ENCODE measurements at regions of chr19 and their contacts with region 1.

Region 1: DNA sequence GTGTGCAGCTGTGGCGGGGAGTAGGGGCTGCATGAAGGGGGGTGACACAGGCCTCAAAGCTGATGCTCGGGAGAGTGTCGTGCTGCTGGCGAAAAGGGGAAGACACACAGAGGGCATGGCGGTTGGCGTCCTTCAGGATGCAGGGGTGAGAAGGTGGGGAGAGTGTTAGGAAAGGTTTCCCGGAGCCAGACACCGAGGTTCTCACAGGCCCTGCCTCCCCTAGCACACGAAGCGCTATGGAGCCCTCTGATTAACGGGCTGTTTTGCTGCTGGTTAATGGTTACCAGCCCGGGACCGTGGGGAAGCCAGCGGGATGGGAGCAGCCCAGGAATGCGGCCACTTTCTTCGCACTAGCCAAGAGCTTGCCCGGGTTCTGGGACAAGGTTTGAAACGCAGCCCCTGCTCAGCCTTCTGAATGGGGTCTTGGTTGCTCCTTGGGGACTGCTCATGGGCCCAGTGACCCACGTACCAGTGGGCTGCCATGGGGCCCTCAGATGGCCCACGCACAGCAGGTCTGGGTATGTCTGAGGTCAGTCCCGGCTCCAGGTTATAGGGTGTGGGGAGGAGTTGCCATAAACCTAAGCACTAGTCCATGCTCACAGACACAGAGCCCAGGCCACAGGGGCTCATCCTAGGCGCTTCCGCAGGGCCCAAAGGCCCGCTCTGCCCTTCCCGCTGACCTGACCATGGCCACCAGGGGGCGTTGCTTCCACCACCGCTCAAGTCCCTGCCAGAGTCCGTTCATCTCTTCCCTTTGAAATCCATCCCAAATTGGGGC is 31.3 kb upstream of the ISYNA1 start:
- DNase-seq: peak; percentile 87
- ATAC-seq: peak; percentile 74
- H3K4me3 Mint-ChIP-seq: no peak overlapping the region
- H3K27ac Mint-ChIP-seq: no peak overlapping the region
- H3K4me1 Mint-ChIP-seq: peaks cover 9% of the 10 kb centered on the region
- H3K27me3 Mint-ChIP-seq: no peaks in the 10 kb centered on the region
- CTCF ChIP-seq: peak; percentile 88

Region 2: DNA sequence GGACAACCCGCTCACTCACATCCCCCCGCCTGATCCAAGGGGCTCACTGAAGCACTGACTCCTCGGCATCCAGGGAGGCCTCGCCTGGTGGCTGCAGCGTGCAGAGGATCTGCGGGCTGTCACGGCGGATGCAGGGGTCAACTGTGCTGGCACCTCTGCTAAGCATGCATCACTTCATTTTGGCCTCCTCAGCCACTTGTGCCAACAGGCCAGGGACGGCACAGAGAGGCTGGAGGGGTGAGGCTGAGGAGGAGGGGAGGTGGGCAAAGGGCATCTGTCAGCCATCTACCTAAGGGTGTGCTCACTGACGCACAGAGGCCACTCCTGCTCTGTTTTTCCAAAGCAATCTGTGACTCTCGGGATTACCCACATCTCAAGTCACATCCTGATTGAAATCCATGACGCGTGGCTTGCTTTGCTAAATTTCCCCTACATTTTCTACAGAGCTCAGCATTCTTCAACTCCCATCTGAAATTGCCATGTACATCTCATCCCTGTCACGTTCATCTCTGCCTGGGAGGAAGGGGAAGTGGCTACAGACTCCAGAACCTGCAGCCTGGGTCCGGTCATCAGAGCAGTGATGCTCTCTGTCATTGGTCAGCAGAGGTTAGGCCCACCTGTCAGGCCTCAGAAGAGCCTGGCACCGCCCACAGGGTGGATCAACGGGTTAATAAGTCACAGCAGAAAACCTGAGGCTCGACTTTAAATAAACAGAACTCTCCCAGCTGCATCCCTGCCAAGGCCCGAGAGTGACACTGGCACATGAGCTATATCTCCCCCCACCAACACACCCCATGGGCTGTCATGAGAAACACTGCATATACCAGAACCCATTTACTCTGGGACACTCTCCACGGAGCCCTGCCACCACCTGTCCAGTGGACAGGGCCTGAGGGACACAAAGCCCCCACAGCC is 35.0 kb after region 1 on chr19:
- CTCF ChIA-PET with region 1: interaction called, 16 read pairs
- POLR2A ChIA-PET with region 1: no interaction called
- DNase-seq: no peak
- ATAC-seq: peak; percentile 68
- H3K4me3 Mint-ChIP-seq: no peak overlapping the region
- H3K27ac Mint-ChIP-seq: peak overlapping the region; percentile 73; the same call in 1 of the 2 replicates
- H3K4me1 Mint-ChIP-seq: peaks cover 13% of the 10 kb centered on the region
- H3K27me3 Mint-ChIP-seq: no peaks in the 10 kb centered on the region
- CTCF ChIP-seq: no peak

Region 3: DNA sequence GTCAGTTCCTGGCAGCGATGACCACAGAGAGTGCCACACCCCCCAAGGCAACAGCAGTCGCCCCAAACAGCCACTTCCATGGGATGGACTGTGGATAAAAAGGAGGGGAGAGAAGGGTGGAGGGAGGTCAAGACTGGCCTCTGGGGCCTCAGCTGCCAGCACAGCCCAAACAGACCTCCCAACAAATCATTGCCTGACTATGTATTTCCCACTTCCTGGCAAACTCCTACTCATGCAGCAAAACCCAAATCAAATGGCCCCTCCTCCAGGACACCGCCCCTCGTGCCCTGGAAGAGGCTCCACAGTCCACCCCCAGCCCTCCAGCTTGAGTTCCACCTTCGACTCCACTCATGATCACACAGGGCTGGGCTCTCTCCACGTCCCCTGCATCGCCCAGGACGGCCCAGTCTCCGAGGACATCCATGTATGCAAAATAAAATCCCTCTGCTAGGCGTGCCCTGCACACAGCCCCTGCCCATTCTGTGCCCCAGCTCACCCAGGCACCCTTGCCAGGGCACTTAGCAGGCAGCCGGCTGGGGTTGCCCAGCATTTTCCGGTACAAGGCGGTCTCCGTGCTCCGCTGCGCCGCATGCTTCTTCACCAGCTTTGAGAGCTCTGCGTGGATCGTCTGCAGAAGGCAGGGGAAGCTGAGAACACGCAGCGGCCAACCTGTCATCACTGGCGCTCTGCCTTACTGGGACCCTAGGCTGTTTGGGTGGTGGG is 63.1 kb after region 1 on chr19:
- CTCF ChIA-PET with region 1: interaction called, 11 read pairs
- POLR2A ChIA-PET with region 1: no interaction called
- DNase-seq: no peak
- ATAC-seq: no peak
- H3K4me3 Mint-ChIP-seq: no peak overlapping the region
- H3K27ac Mint-ChIP-seq: no peak overlapping the region
- H3K4me1 Mint-ChIP-seq: no peaks in the 10 kb centered on the region
- H3K27me3 Mint-ChIP-seq: no peaks in the 10 kb centered on the region
- CTCF ChIP-seq: no peak

Region 4: GRCh38 chr19:18588611-18589379 is 119.5 kb after region 1 on chr19 and contains the start of gene REX1BD:
- CTCF ChIA-PET with region 1: interaction called, 39 read pairs
- POLR2A ChIA-PET with region 1: no interaction called
- DNase-seq: peak; percentile 87
- ATAC-seq: peak; percentile 51
- H3K4me3 Mint-ChIP-seq: peak within 1 kb of the TSS; percentile 86
- H3K27ac Mint-ChIP-seq: peak within 1 kb of the TSS; percentile 98
- H3K4me1 Mint-ChIP-seq: peaks cover 32% of the 10 kb centered on the region
- H3K27me3 Mint-ChIP-seq: peaks cover 10% of the 10 kb centered on the region
- CTCF ChIP-seq: peak; percentile 85
- total RNA-seq, gene REX1BD: 90.2 to 107 TPM (median 99.0 TPM) in 3 replicates

Region 5: DNA sequence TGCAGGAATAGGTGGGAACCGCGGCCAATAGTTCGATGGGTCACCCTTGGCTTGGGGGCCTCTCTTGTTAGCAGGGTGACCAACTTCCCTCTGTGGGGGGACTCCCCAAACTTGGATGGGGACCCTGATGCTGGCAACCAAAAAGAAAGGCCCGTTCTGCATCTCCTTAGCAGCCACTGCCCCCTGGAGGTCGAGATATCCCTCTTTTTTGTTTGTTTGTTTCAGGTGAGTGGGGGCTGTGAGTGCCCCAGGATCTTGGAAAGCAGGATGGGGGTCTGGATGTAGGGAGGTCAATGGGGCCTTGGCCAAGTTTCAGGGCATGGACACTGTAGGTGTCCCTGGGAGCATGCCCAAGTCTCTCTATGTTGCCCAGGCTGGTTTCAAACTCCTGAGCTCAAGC is 206.5 kb after region 1 on chr19:
- CTCF ChIA-PET with region 1: interaction called, 14 read pairs
- POLR2A ChIA-PET with region 1: no interaction called
- DNase-seq: peak; percentile 65
- ATAC-seq: peak; percentile 26
- H3K4me3 Mint-ChIP-seq: no peak overlapping the region
- H3K27ac Mint-ChIP-seq: no peak overlapping the region
- H3K4me1 Mint-ChIP-seq: peaks cover 18% of the 10 kb centered on the region
- H3K27me3 Mint-ChIP-seq: no peaks in the 10 kb centered on the region
- CTCF ChIP-seq: peak; percentile 45; the same call in 1 of the 2 replicates

Measured in WTC11 (cell line).